ENCODE measurements at regions of chr2 and their contacts with region 1.

Region 1: GRCh38 chr2:198004921-198005829 is 200.8 kb downstream of the PLCL1 start:
- DNase-seq: no peak
- H3K4me3 Mint-ChIP-seq: peak overlapping the region; percentile 20
- H3K27ac Mint-ChIP-seq: peak overlapping the region; percentile 79
- H3K4me1 Mint-ChIP-seq: peaks cover 49% of the 10 kb centered on the region
- H3K27me3 Mint-ChIP-seq: no peaks in the 10 kb centered on the region

Region 2: GRCh38 chr2:197322724-197323720 is 682.2 kb before region 1 on chr2:
- intact Hi-C with region 1: no loop called
- DNase-seq: peak; percentile 20
- H3K4me3 Mint-ChIP-seq: peak overlapping the region; percentile 62
- H3K27ac Mint-ChIP-seq: peak overlapping the region; percentile 92
- H3K4me1 Mint-ChIP-seq: peaks cover 56% of the 10 kb centered on the region
- H3K27me3 Mint-ChIP-seq: no peaks in the 10 kb centered on the region

Region 3: GRCh38 chr2:197838036-197838435 is 167.1 kb before region 1 on chr2:
- intact Hi-C with region 1: loop called (anchors 1 kb)
- DNase-seq: no peak
- H3K4me3 Mint-ChIP-seq: peak overlapping the region; percentile 53
- H3K27ac Mint-ChIP-seq: peak overlapping the region; percentile 68
- H3K4me1 Mint-ChIP-seq: peaks cover 44% of the 10 kb centered on the region
- H3K27me3 Mint-ChIP-seq: peaks cover 4% of the 10 kb centered on the region

Region 4: DNA sequence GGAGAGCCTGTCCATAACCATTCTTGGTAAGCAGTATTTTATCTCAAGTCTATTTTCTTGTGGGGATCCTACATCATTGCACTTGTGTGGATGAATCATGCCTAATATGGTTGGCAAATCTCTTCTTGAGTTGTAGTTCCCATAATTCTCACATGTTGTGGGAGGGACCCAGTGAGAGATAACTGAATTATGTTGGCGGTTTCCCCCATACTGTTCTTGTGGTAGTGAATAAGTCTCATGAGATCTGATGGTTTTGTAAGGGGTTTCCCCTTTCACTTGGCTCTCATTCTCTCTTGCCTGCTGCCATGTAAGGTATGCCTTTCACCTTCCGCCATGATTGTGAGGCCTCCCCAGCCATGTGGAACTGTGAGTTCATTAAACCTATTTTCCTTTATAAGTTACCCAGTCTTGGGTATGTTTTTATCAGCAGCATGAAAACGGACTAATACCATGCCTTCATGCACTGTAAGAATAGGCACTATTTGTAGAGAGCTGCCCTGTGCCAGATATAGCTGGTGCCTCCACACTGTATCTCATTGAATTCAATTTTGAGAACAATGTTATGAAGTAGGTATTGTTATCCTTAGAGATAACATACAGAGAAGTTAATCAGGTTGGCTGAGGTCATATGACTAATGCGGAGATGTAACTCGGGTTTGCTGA is 52.5 kb before region 1 on chr2:
- intact Hi-C with region 1: loop called (anchors 1 kb)
- DNase-seq: no peak
- H3K4me3 Mint-ChIP-seq: no peak overlapping the region
- H3K27ac Mint-ChIP-seq: no peak overlapping the region
- H3K4me1 Mint-ChIP-seq: peaks cover 20% of the 10 kb centered on the region
- H3K27me3 Mint-ChIP-seq: peaks cover 7% of the 10 kb centered on the region